Left ventricle myocardium superior (tissue), 1 donor: ENCODE measurements at regions of chr9 and their contacts with region 1.

Region 1: DNA sequence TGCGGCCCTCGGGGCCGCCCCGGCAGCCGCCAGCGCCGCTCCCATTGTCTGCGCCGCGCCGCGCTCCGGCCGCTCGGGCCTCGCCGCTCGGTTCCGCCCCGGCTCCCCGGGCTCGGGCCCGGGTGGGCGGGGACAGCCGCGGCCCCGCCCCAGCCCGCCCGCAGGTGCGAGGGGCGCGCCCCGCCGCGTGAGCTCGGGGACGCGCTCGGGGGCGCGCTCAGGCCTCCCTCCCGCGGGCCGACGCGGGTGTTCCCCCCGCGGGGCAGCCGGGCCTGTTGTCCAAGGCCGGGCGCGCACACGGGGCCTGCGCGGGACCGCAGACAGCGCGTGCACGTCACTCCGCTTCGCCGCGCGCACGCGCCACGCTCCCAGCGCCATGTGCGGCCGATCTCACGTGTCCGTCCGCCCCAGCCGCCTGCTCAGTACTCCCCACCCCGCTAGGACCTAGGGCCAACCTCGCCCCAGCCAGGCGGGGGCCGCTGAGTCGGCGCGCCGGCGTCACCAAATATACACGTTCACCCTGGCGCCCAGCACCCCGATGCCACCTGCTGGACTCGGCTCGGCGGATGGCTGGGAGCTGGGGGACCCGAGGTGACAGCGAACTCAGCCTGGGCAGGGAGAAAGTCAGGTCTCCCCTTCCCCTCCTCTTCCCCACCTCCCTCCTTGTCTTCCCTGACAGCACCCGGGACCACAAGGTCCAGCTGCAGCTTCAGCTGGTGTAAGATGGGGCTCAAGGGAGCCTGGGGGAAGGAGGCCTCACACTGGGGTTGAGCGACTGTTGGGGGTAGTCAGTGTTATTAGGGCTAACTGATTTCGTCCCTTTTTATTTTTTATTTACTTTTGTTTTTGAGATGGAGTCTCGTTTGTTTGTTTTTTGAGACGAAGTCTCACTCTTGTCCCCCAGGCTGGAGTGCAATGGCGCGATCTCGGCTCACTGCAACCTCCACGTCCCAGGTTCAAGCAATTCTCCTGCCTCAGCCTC is 14.3 kb downstream of the GBGT1 start:
- DNase-seq: peak; percentile 95
- ATAC-seq: peak; percentile 82

Region 2: DNA sequence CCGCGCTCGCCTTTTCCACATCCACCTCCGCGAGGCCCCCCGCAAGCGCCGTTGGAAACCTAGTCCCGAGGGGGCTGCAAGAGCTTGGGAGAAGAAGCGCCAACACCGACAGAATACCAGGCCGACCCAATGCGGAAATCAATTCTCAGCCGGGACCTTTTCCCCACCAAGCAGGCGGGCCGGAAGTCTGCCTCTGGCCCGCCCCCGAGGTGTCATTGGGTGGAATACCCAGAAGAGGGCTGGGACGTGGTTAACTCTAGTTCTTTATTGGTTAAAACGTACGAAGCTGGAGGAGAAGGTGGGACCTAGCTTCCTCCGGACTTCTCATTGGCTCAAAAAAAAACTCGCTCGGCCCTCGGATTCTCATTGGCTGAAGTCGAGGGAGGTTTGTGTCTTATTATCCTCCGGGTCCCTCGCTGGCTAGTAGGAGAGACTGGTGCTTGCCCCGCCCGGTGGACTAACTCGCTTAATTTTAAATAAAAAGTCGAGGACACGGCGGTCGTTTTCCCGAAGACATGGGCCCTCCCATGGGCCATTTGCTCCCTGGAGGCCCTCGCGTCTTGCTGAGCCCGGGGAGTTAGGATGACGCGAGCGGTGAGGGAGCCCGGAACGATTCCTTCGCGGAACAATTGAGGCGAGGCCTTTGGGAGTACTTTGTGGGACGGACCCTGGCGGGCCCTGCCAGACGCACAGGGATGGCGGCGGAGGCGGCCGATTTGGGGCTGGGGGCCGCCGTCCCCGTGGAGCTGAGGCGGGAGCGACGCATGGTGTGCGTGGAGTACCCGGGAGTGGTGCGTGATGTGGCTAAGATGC is 118.9 kb before region 1 on chr9 and contains the start of gene GTF3C5:
- intact Hi-C with region 1: loop called (anchors 10 kb)
- DNase-seq: peak; percentile 93
- ATAC-seq: peak; percentile 98
- total RNA-seq, gene GTF3C5: 60.8 TPM

Region 3: GRCh38 chr9:133103987-133104505 is 45.4 kb before region 1 on chr9:
- intact Hi-C with region 1: loop called (anchors 2 kb)
- DNase-seq: no peak
- ATAC-seq: no peak